HCT116 (cell line): ENCODE measurements at regions of chr6 and their contacts with region 1.

Region 1: GRCh38 chr6:41318654-41319565 is 16.5 kb upstream of the NCR2 start:
- DNase-seq: peak; percentile 71
- ATAC-seq: peak; percentile 99
- H3K4me3 ChIP-seq: peak overlapping the region; percentile 26 to 31
- H3K27ac ChIP-seq: no peak overlapping the region
- H3K4me1 ChIP-seq: peaks cover 3 to 8% of the 10 kb centered on the region in 2 experiments
- H3K27me3 ChIP-seq: peaks cover 33% of the 10 kb centered on the region
- CTCF ChIP-seq: peak; percentile 88 to 99 (median 99)
- POLR2A ChIP-seq: no peak
- RAD21 ChIP-seq: peak; percentile 94

Region 2: DNA sequence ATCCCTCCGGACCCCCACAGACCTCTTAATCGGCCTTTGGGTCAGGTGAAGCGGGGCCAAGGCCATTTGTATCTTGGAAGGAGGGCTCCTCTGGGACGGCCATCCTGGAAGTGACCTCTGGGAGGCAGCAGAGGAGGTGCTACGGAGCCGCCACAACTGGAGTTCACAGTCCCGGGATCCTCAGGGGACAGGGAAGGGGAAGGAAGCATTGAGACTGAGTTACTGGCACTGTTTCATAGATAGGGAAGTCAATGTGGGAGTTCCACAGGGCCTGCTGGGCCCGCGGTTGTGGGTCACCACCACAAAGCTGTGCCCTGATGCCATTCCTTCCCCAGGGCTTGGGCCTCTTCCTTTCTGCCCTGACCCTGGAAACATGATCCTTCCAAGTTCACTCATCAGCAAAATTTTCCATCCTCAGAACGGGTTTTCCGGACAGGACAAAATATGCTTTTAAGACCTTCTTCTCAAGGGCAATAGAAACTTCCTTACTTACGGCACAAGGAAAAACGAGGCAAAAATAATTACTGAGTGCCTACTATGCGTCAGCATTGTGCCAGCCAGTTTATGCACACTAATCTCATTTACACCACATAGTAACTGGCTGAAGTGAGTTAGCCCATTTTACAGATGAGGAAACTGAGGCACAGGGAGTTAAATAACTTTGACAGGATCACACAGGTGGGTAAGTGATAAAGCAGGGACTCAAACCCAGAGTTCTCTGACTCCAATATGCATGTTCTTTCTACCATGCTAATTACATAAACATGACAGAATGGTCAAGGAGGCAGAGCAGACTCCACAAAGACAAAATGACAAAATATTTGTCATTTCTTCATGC is 423.7 kb before region 1 on chr6:
- CTCF ChIA-PET with region 1: no interaction called
- POLR2A ChIA-PET with region 1: no interaction called
- RAD21 ChIA-PET with region 1: no interaction called
- intact Hi-C with region 1: loop called (anchors 5 kb)
- DNase-seq: peak; percentile 40
- ATAC-seq: peak; percentile 99
- H3K4me3 ChIP-seq: no peak overlapping the region
- H3K27ac ChIP-seq: no peak overlapping the region
- H3K4me1 ChIP-seq: peaks cover 0 to 3% of the 10 kb centered on the region in 2 experiments; a peak in 2 of 4 replicates
- H3K27me3 ChIP-seq: no peaks in the 10 kb centered on the region
- CTCF ChIP-seq: peak; percentile 70 to 78 (median 77)
- POLR2A ChIP-seq: no peak
- RAD21 ChIP-seq: peak; percentile 91

Region 3: GRCh38 chr6:41008011-41008410 is 310.9 kb before region 1 on chr6:
- CTCF ChIA-PET with region 1: no interaction called
- POLR2A ChIA-PET with region 1: no interaction called
- RAD21 ChIA-PET with region 1: no interaction called
- intact Hi-C with region 1: loop called (anchors 5 kb)
- DNase-seq: no peak
- ATAC-seq: no peak
- H3K4me3 ChIP-seq: no peak overlapping the region
- H3K27ac ChIP-seq: no peak overlapping the region
- H3K4me1 ChIP-seq: no peaks in the 10 kb centered on the region
- H3K27me3 ChIP-seq: no peaks in the 10 kb centered on the region
- CTCF ChIP-seq: no peak
- POLR2A ChIP-seq: no peak
- RAD21 ChIP-seq: no peak

Region 4: GRCh38 chr6:41092421-41093140 is 226.3 kb before region 1 on chr6:
- CTCF ChIA-PET with region 1: no interaction called
- POLR2A ChIA-PET with region 1: no interaction called
- RAD21 ChIA-PET with region 1: no interaction called
- intact Hi-C with region 1: loop called (anchors 1 kb)
- DNase-seq: no peak
- ATAC-seq: peak; percentile 70
- H3K4me3 ChIP-seq: no peak overlapping the region
- H3K27ac ChIP-seq: no peak overlapping the region
- H3K4me1 ChIP-seq: no peaks in the 10 kb centered on the region
- H3K27me3 ChIP-seq: no peaks in the 10 kb centered on the region
- CTCF ChIP-seq: peak; percentile 41 to 45 (median 44); a peak in 4 of 6 replicates
- POLR2A ChIP-seq: no peak
- RAD21 ChIP-seq: peak; percentile 44

Region 5: DNA sequence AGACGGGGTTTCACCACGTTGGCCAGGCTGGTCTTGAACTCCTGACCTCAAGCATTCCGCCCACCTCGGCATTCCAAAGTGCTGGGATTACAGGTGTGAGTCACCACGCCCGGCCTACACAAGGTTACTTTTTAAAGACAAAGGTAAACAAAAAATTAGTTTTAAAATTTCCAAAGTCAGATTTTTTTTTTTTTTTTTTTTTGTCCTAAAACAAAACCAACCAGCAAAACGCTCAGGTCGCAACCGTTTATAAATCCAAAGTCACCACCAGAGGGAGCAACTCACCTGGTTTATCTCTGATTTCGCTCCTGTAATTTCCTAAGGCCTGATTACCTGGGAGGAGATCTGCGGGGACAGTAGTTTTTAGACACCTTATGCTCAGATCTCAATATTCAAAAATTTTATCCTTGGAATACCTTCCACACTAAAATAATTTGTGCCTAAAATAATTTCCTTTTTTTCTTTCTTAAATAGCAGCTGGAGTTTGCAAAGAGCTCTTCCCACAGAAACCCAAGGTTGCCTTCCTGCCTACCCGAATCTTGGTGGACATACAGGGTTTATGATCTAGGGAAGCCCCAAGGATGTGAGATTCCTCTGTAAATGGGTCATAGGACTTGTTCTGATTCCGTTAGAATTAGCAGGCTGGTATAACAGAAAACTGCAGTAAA is 12.6 kb before region 1 on chr6:
- CTCF ChIA-PET with region 1: interaction called, 15 read pairs
- POLR2A ChIA-PET with region 1: no interaction called
- RAD21 ChIA-PET with region 1: interaction called in 1 of 2 experiments, 4 read pairs
- intact Hi-C with region 1: loop called (anchors 1 kb)
- DNase-seq: peak; percentile 58
- ATAC-seq: peak; percentile 84
- H3K4me3 ChIP-seq: peak overlapping the region; percentile 19 to 40; a peak in 3 of 4 replicates
- H3K27ac ChIP-seq: no peak overlapping the region
- H3K4me1 ChIP-seq: 0 out of 4 replicates have a peak, but pooled peaks cover 0 to 8% of the 10 kb centered on the region in 2 experiments
- H3K27me3 ChIP-seq: peaks cover 2% of the 10 kb centered on the region; the same call in 1 of the 2 replicates
- CTCF ChIP-seq: peak; percentile 59 to 73 (median 64); a peak in 5 of 6 replicates
- POLR2A ChIP-seq: no peak
- RAD21 ChIP-seq: peak; percentile 60

Region 6: GRCh38 chr6:42332916-42333315 is 1014.0 kb after region 1 on chr6:
- CTCF ChIA-PET with region 1: no interaction called
- POLR2A ChIA-PET with region 1: no interaction called
- RAD21 ChIA-PET with region 1: no interaction called
- intact Hi-C with region 1: no loop called
- DNase-seq: no peak
- ATAC-seq: no peak
- H3K4me3 ChIP-seq: no peak overlapping the region
- H3K27ac ChIP-seq: no peak overlapping the region
- H3K4me1 ChIP-seq: peaks cover 6 to 7% of the 10 kb centered on the region in 2 experiments
- H3K27me3 ChIP-seq: no peaks in the 10 kb centered on the region
- CTCF ChIP-seq: no peak
- POLR2A ChIP-seq: no peak
- RAD21 ChIP-seq: no peak